Naive thymus-derived CD4-positive, alpha-beta T cell (primary cell): ENCODE measurements at regions of chr12 and their contacts with region 1.

Region 1: DNA sequence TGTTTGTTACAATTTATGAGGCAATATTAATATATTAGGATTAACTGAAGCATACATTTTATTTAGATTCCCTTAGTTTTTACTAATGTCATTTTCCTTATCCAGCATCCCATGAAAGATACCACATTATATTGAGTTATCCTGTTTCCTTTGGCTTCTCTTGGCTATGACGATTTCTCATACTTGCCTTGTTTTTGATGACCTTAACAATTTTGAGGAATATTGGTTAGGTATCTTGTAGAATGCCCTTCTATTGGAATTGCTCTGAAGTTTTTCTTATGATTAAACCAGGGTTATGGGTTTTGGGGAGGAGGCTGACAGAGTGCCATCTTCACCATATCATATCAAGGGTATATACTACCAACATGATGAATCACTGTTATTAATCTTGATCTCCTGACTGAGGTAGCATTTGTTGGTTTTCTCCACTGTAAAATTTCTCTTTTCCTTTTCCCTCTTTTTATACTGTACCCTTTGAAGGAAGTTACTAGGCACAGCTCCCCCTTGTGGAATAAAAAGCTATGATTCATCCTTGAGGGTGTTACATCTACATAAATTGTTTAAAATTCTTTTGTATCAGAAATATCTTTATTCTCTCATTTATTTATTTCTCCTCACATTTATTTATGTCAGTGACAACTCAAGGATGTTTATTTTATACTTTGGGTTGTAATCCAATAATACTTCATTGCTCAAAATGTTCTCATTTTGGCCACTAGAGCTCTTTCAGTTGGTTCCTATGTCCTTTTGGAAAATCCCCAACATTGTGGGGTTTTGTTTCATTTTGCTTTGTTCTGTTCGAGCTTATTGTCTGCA is 239.0 kb downstream of the SLC16A7 start:
- DNase-seq: peak in 6 of 9 donors; percentile 4 to 25 (median 20)
- ATAC-seq: peak; percentile 37
- H3K4me3 ChIP-seq: no peak overlapping the region
- H3K4me3 Mint-ChIP-seq: no peak overlapping the region
- H3K27ac ChIP-seq: no peak overlapping the region
- H3K27ac Mint-ChIP-seq: no peak overlapping the region
- H3K4me1 ChIP-seq: no peaks in the 10 kb centered on the region
- H3K4me1 Mint-ChIP-seq: no peaks in the 10 kb centered on the region
- H3K27me3 ChIP-seq: no peaks in the 10 kb centered on the region
- H3K27me3 Mint-ChIP-seq: peaks cover 0 to 17% (median 11%) of the 10 kb centered on the region in 5 donors

Region 2: DNA sequence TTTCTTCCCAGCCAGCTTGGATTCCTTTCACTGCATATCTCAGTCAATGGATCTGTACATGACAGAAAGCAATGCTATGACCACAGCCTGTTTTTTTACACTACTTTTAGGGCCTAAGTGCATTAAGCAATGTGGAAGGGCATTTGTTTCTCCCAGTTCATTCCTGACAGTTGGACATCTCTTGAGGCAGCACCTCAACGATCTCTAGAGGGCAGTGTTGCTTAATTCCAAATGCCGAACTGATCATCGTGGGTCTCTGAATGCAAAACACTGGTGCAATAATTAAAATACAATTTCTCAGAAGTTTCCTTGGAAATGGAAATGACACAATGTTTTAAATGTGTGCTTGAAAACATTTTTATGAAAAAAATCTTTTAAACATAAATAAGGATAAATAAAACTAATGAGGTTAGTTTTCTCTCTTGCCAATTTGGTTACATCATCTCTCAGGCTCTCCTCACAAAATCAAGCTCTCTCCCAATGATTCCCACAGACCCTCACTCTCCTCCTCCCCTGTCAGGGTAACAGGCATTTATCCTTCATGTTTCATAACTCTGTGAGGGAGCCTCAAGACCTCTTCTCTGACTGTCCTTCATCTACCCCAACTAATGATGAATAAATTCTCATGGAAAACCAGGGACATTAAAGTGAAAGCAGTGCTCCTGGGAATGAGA is 431.5 kb before region 1 on chr12:
- CTCF ChIA-PET with region 1: interaction called, 4 read pairs
- POLR2A ChIA-PET with region 1: no interaction called
- intact Hi-C with region 1: loop called (anchors 1 kb)
- DNase-seq: peak in 7 of 9 donors; percentile 11 to 42 (median 37)
- ATAC-seq: peak; percentile 55
- H3K4me3 ChIP-seq: no peak overlapping the region
- H3K4me3 Mint-ChIP-seq: no peak overlapping the region
- H3K27ac ChIP-seq: no peak overlapping the region
- H3K27ac Mint-ChIP-seq: no peak overlapping the region
- H3K4me1 ChIP-seq: no peaks in the 10 kb centered on the region
- H3K4me1 Mint-ChIP-seq: peaks cover 0 to 12% (median 1%) of the 10 kb centered on the region in 7 donors
- H3K27me3 ChIP-seq: no peaks in the 10 kb centered on the region
- H3K27me3 Mint-ChIP-seq: peaks cover 0 to 8% (median 0%) of the 10 kb centered on the region in 5 donors

Region 3: DNA sequence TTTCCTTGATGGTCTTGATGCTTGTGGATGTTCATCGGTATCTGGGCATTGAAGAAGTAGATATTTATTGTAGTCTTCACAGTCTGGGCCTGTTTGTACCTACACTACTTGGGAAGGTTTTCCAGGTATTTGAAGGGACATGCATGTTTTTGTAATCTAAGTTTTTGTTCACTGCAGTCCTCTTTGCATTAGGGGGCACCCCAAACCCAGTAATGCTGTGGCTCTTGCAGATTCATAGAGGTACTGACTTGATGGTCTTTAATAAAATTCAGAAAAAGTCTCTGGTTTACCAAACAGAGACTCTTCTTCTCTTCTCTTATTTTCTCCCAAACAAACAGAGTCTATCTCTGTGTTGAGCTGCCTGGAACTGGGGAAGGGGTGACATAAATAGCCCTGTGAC is 389.9 kb before region 1 on chr12:
- CTCF ChIA-PET with region 1: interaction called, 5 read pairs
- POLR2A ChIA-PET with region 1: no interaction called
- intact Hi-C with region 1: loop called (anchors 1 kb)
- DNase-seq: peak in 5 of 9 donors; percentile 15 to 41 (median 26)
- ATAC-seq: no peak
- H3K4me3 ChIP-seq: no peak overlapping the region
- H3K4me3 Mint-ChIP-seq: no peak overlapping the region
- H3K27ac ChIP-seq: no peak overlapping the region
- H3K27ac Mint-ChIP-seq: no peak overlapping the region
- H3K4me1 ChIP-seq: no peaks in the 10 kb centered on the region
- H3K4me1 Mint-ChIP-seq: no peaks in the 10 kb centered on the region
- H3K27me3 ChIP-seq: no peaks in the 10 kb centered on the region
- H3K27me3 Mint-ChIP-seq: peaks cover 0 to 19% (median 9%) of the 10 kb centered on the region in 5 donors

Region 4: GRCh38 chr12:59763835-59764234 is 71.0 kb before region 1 on chr12:
- CTCF ChIA-PET with region 1: no interaction called
- POLR2A ChIA-PET with region 1: no interaction called
- intact Hi-C with region 1: no loop called
- DNase-seq: no peak
- ATAC-seq: no peak
- H3K4me3 ChIP-seq: no peak overlapping the region
- H3K4me3 Mint-ChIP-seq: peak overlapping the region in 1 of 10 donors; percentile 24
- H3K27ac ChIP-seq: no peak overlapping the region
- H3K27ac Mint-ChIP-seq: peak overlapping the region in 1 of 9 donors; percentile 31
- H3K4me1 ChIP-seq: no peaks in the 10 kb centered on the region
- H3K4me1 Mint-ChIP-seq: peaks cover 0 to 31% (median 23%) of the 10 kb centered on the region in 7 donors
- H3K27me3 ChIP-seq: no peaks in the 10 kb centered on the region
- H3K27me3 Mint-ChIP-seq: no peaks in the 10 kb centered on the region